ENCODE measurements at regions of chr14 and their contacts with region 1.

Region 1: DNA sequence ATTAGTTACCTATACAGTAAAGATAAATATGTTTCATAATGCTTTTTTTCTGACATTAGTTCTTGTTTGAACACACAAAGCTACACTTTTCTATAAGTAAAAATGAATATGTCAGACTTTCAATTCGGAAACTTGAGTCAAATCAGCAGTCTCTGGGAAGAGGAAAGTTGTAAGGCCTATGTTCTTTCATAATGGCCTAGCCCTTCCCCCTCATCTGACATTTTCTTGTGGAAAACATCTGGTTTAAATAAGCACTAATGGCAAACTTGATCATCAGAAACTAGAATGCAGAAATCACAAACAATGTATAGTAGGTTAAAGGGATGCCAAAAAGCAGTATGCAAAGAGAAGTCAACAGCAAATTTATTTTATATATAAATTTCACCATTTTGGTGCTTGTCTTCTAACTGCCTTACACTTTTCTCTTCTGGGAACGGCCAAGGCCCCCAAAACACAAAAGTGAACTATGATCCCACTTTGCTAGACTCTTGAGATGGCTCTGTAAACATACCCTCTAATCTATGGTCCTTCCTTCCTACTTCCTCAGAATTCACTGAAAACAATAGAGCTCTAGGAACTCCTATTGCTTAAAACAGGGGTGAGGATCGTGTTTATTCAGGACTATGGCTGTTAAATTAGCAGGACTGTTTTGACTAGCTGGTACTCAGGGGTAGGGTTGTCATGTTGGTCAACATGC is 444.1 kb downstream of the RAD51B start:
- DNase-seq: no peak
- ATAC-seq: no peak
- H3K4me3 ChIP-seq: no peak overlapping the region
- H3K27ac ChIP-seq: no peak overlapping the region
- H3K4me1 ChIP-seq: no peaks in the 10 kb centered on the region
- H3K27me3 ChIP-seq: no peaks in the 10 kb centered on the region
- CTCF ChIP-seq: no peak

Region 2: GRCh38 chr14:68369281-68370056 is 105.8 kb after region 1 on chr14:
- intact Hi-C with region 1: loop called in 1 of 2 experiments (anchors 5 kb)
- DNase-seq: no peak
- ATAC-seq: no peak
- H3K4me3 ChIP-seq: no peak overlapping the region
- H3K27ac ChIP-seq: peak overlapping the region; percentile 17
- H3K4me1 ChIP-seq: peaks cover 8% of the 10 kb centered on the region
- H3K27me3 ChIP-seq: no peaks in the 10 kb centered on the region
- CTCF ChIP-seq: no peak

Region 3: DNA sequence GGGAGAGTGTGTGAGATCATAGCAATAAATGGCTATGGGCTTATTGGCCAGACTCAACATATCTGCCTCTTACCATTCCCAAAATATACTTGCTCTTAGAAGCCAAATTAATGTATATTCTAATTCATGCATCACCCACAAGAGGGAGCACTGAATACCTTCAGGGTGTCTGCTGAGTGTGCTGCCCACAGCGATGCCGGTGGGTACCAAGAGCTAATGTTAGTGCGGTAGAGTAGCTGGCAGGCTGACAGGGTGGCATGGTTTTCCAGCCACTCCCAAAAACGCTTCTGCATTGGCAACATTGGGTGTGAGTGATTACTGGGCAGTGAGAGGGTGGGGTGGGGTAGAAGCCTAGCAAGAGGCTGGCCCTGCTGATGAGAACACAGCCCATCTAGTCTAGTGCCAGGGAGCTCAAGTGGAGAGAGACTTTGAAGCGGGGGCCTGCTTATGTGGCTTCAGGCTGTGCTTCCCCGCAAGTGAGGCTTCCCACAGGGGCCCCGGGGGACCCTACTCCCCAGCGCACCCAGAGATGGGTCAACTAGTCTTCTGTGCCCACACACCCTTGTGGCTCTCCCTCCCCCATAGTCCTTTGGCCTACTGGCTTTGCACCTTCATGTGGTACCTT is 1211.6 kb after region 1 on chr14:
- intact Hi-C with region 1: no loop called
- DNase-seq: no peak
- ATAC-seq: peak in 1 of 4 donors; percentile 28
- H3K4me3 ChIP-seq: no peak overlapping the region
- H3K27ac ChIP-seq: no peak overlapping the region
- H3K4me1 ChIP-seq: no peaks in the 10 kb centered on the region
- H3K27me3 ChIP-seq: peaks cover 0 to 8% (median 0%) of the 10 kb centered on the region in 3 donors
- CTCF ChIP-seq: peak; percentile 32

Measured in psoas muscle (tissue), 8 donors.